CD4-positive, alpha-beta memory T cell (primary cell): ENCODE measurements at regions of chr1 and their contacts with region 1.

Region 1: GRCh38 chr1:230642263-230642959 is at the start of gene COG2:
- DNase-seq: peak; percentile 87 to 96 (median 92)
- H3K4me3 ChIP-seq: peak within 1 kb of the TSS; percentile 71 to 85
- H3K4me3 Mint-ChIP-seq: peak within 1 kb of the TSS; percentile 93 to 100 (median 99)
- H3K27ac ChIP-seq: peak within 1 kb of the TSS; percentile 72
- H3K27ac Mint-ChIP-seq: peak within 1 kb of the TSS; percentile 77 to 98 (median 96)
- H3K4me1 ChIP-seq: peaks cover 44% of the 10 kb centered on the region
- H3K4me1 Mint-ChIP-seq: peaks cover 37 to 57% (median 47%) of the 10 kb centered on the region in 4 donors
- H3K27me3 ChIP-seq: no peaks in the 10 kb centered on the region
- H3K27me3 Mint-ChIP-seq: peaks cover 6 to 17% of the 10 kb centered on the region in 2 donors
- total RNA-seq, gene COG2: 41.5 to 44.6 TPM

Region 2: DNA sequence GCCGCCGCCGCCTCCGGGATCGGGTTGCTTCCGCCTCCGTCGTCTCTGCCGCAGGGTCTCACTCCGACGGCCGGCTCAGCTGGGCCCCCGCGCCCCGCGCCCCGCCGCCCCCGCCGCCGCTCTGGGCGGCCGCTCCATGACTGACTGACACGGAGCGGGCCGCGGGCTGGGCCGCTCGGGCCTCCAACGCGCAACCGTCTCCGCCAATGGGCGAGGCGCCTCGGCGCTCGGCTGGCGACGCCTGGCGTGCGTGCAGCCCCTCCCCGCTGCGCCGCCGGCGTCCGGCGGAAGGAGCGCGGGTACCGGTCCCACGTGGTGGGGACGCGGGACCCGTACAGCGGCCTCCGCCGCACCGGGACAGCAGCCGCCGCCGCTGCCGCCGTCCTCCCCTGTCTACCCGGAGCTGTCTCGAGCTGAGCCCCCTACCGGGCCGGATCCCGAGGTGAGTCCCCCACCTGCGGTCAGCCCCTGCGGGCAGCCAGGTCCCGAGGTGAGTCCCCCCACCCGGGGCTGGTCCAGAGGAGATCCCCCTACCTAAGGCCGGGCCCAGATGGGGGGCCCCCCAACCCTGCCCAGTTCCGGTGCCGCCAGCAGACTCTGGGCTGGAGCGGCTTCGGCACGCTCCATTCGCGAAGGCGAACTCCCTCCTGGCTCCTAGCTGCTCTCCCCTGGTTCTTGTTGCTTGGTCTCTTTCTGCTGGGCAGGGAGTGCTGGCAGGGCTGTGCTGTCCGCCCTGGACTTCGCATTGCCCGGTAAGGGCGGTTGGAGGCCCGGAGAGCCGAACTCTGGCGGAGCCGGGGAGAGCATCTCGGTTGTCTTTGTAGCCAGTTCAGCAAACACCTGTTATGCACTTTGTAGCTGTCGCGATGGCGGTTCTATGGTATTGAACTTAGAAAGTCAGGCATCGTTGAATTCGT is 1016.2 kb before region 1 on chr1 and contains the starts of genes TAF5L and URB2:
- CTCF ChIA-PET with region 1: interaction called, 3 read pairs
- POLR2A ChIA-PET with region 1: no interaction called
- intact Hi-C with region 1: loop called (anchors 2 kb)
- DNase-seq: peak; percentile 84 to 88 (median 87)
- H3K4me3 ChIP-seq: peak within 1 kb of the TSS; percentile 77 to 98
- H3K4me3 Mint-ChIP-seq: peak within 1 kb of the TSS; percentile 97 to 100 (median 99)
- H3K27ac ChIP-seq: peak within 1 kb of the TSS; percentile 63
- H3K27ac Mint-ChIP-seq: peak within 1 kb of the TSS; percentile 91 to 99 (median 97)
- H3K4me1 ChIP-seq: peaks cover 41% of the 10 kb centered on the region
- H3K4me1 Mint-ChIP-seq: peaks cover 33 to 67% (median 51%) of the 10 kb centered on the region in 4 donors
- H3K27me3 ChIP-seq: no peaks in the 10 kb centered on the region
- H3K27me3 Mint-ChIP-seq: no peaks in the 10 kb centered on the region
- total RNA-seq, gene TAF5L: 20.7 to 21.3 TPM
- total RNA-seq, gene URB2: 8.5 to 9.4 TPM

Region 3: GRCh38 chr1:230661976-230662375 is 19.6 kb after region 1 on chr1:
- CTCF ChIA-PET with region 1: interaction called, 3 read pairs
- POLR2A ChIA-PET with region 1: no interaction called
- intact Hi-C with region 1: loop called (anchors 2 kb)
- DNase-seq: no peak
- H3K4me3 ChIP-seq: no peak overlapping the region
- H3K4me3 Mint-ChIP-seq: no peak overlapping the region
- H3K27ac ChIP-seq: no peak overlapping the region
- H3K27ac Mint-ChIP-seq: peak overlapping the region in 2 of 7 donors; percentile 0 to 33
- H3K4me1 ChIP-seq: no peaks in the 10 kb centered on the region
- H3K4me1 Mint-ChIP-seq: peaks cover under 1 to 13% (median 12%) of the 10 kb centered on the region in 4 donors
- H3K27me3 ChIP-seq: no peaks in the 10 kb centered on the region
- H3K27me3 Mint-ChIP-seq: no peaks in the 10 kb centered on the region

Region 4: DNA sequence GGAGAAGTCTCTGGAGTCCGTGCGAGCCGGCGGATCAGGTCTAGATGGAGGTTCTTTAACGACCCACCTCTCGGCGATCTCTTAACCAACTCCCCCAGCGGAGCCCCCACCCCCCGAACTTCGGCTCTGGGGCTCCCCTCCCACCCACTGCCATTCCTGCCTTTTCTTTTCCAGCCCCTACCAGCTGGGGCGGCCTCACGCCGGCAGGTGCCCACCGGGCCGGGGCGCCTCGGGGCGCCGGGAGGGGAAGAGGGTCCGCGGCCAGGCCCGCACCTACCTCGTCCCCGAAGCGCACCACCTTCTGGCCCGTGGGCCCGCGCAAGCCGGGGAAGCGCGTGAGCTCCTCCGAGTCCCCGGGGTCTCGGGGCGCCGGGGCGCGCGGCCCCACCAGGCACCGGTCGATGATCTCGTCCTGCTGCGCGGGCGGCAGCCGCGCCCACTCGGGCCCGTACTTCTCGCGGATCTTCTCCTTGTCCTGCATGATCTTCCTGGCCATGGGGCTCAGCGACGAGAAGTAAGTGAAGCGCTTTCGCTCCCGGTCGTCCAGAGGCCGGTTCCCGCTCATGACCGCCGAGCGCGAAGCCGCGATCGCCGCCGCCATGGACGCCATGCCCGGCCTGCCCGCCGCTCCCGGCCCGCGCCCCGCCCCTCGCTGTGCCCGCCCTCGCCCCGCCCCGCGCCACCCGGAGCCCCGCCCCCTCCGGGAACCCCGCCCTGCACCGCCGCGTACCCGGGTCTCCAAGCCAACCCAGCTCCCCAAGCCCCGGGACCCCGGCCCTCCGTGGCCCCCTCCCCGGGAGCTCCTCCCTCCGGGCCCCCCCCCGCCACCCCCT is 225.7 kb after region 1 on chr1 and contains the start of gene C1orf198:
- CTCF ChIA-PET with region 1: no interaction called
- POLR2A ChIA-PET with region 1: no interaction called
- intact Hi-C with region 1: loop called (anchors 1 kb)
- DNase-seq: peak; percentile 61 to 77 (median 68)
- H3K4me3 ChIP-seq: peak within 1 kb of the TSS; percentile 45 to 75
- H3K4me3 Mint-ChIP-seq: peak within 1 kb of the TSS; percentile 87 to 95 (median 90)
- H3K27ac ChIP-seq: peak within 1 kb of the TSS; percentile 44
- H3K27ac Mint-ChIP-seq: peak within 1 kb of the TSS; percentile 43 to 84 (median 69)
- H3K4me1 ChIP-seq: peaks cover 15% of the 10 kb centered on the region
- H3K4me1 Mint-ChIP-seq: peaks cover 9 to 19% (median 14%) of the 10 kb centered on the region in 4 donors
- H3K27me3 ChIP-seq: peaks cover 14% of the 10 kb centered on the region
- H3K27me3 Mint-ChIP-seq: peaks cover 17 to 18% of the 10 kb centered on the region in 2 donors
- total RNA-seq, gene C1orf198: 4.2 to 4.4 TPM

Region 5: GRCh38 chr1:231040019-231040799 is 397.8 kb after region 1 on chr1 and contains the start of gene FAM89A:
- CTCF ChIA-PET with region 1: no interaction called
- POLR2A ChIA-PET with region 1: interaction called, 3 read pairs
- intact Hi-C with region 1: loop called (anchors 1 kb)
- DNase-seq: peak; percentile 61 to 75 (median 69)
- H3K4me3 ChIP-seq: peak within 1 kb of the TSS; percentile 45 to 64
- H3K4me3 Mint-ChIP-seq: peak within 1 kb of the TSS; percentile 79 to 87 (median 84)
- H3K27ac ChIP-seq: peak within 1 kb of the TSS; percentile 46
- H3K27ac Mint-ChIP-seq: peak within 1 kb of the TSS; percentile 15 to 93 (median 72)
- H3K4me1 ChIP-seq: peaks cover 13% of the 10 kb centered on the region
- H3K4me1 Mint-ChIP-seq: peaks cover 18 to 41% (median 29%) of the 10 kb centered on the region in 4 donors
- H3K27me3 ChIP-seq: no peaks in the 10 kb centered on the region
- H3K27me3 Mint-ChIP-seq: no peaks in the 10 kb centered on the region
- total RNA-seq, gene FAM89A: 6.5 to 8.7 TPM

Region 6: DNA sequence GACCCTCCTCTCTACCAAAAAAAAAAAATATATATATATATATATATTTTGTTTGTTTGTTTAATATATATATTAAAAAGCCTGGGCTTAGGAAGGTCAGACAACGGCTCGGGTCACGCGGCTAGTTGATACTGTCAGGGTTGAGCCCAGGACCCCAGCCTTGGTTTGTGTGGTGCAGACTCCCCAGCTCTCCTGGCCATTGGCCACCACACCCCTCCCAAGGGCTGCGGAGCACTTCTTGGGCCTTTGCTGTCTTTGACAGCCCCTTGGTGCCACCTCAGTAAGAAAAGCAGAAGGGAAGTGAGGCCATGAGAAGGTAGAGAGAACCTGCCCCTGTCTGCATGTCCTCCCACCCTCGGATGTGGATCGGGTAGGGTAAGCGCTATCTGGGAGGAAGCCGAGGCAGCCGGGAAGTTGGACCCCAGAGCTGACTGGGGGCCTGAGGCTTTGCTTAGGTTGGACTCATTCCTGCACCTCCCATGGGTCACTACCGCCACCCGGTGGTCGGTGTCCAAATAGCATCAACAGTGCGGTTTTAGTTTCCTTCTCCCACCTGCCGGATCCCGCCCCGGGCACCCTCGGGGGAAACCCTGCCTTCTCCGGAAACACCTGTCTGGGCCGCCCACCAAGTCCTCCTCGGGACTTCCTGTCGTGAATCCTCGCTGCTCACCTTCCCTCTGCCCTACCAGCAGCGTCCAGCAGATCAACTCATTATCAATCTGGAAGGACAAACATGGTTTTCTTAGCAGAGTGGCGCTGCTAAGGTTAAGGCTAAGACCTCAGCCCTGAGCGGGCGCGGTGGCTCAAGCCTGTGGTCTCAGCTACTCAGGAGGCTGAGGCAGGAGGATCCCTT is 568.8 kb after region 1 on chr1:
- CTCF ChIA-PET with region 1: interaction called, 3 read pairs
- POLR2A ChIA-PET with region 1: no interaction called
- intact Hi-C with region 1: loop called (anchors 1 kb)
- DNase-seq: peak; percentile 79 to 87 (median 82)
- H3K4me3 ChIP-seq: peak overlapping the region in 1 of 2 donors; percentile 27
- H3K4me3 Mint-ChIP-seq: peak overlapping the region; percentile 87 to 95 (median 92)
- H3K27ac ChIP-seq: no peak overlapping the region
- H3K27ac Mint-ChIP-seq: peak overlapping the region in 5 of 7 donors; percentile 41 to 90 (median 84)
- H3K4me1 ChIP-seq: peaks cover 10% of the 10 kb centered on the region
- H3K4me1 Mint-ChIP-seq: peaks cover 4 to 10% (median 7%) of the 10 kb centered on the region in 4 donors
- H3K27me3 ChIP-seq: no peaks in the 10 kb centered on the region
- H3K27me3 Mint-ChIP-seq: peaks cover 0 to 3% of the 10 kb centered on the region in 2 donors

Region 7: DNA sequence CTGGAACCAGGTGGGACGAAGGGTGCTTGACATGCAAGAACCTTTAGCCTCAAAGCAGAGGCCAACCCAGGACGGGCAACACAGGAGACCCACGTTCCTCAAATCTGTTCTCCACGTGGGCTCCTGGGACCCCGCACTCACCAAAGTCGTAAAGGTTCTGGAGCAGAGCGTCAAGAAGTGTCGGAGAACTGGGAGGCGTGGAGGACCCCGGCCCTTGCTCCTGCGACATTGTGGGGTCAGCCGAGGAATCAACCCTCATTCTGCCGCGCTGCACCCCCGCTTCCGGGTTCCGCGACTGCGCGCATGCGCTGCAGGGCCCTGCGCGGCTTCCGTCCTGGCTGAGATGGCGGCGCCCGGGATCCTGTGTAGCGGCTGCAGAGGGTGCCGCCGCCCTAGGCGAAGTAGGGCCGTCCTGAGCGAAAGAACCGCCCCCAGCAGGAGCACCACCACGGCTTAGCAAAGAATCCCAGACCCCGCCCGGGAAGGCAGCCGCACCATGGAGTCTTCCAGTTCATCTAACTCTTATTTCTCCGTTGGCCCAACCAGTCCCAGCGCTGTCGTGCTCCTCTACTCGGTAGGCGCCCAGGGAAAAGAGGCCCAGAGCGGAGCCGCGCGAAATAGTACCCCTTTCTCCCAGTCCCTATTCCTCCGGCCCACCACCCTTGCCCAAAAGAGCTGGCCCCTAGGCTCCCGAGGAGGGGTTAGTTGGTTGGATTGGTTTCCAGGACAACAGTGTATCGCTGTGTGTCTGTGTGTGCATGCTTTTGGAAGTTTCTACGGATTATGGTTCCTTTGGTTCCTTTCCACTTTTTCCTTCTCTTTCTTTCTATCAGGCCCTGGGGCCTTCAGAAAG is 598.7 kb after region 1 on chr1 and contains the start of gene GNPAT:
- CTCF ChIA-PET with region 1: no interaction called
- POLR2A ChIA-PET with region 1: no interaction called
- intact Hi-C with region 1: loop called (anchors 1 kb)
- DNase-seq: peak; percentile 87 to 94 (median 91)
- H3K4me3 ChIP-seq: peak within 1 kb of the TSS; percentile 83 to 99
- H3K4me3 Mint-ChIP-seq: peak within 1 kb of the TSS; percentile 95 to 99 (median 98)
- H3K27ac ChIP-seq: peak within 1 kb of the TSS; percentile 93
- H3K27ac Mint-ChIP-seq: peak within 1 kb of the TSS; percentile 85 to 99 (median 98)
- H3K4me1 ChIP-seq: peaks cover 56% of the 10 kb centered on the region
- H3K4me1 Mint-ChIP-seq: peaks cover 55 to 85% (median 71%) of the 10 kb centered on the region in 4 donors
- H3K27me3 ChIP-seq: no peaks in the 10 kb centered on the region
- H3K27me3 Mint-ChIP-seq: no peaks in the 10 kb centered on the region
- total RNA-seq, gene GNPAT: 36.9 to 41.2 TPM